Lower leg skin (tissue), 4 donors: ENCODE measurements at regions of chr6 and their contacts with region 1.

Region 1: DNA sequence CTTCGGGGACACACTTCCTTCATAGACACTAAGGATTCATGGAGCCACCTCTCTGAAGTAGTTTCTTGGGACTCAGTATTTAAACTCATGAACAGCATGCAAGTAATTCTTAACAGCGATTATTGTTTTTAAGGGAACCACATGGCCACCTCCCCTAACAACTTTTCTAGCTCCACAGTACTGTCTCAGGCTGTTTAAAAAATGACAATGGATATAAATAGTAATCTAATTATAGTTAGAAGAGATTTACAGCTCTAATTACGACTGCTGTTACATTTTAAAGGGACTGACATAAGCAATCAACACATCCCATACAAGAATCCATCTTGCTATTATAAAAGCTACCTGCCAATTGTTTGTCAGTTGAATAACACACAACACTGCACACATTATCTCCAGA is 72.1 kb upstream of the HDGFL1 start:
- DNase-seq: no peak
- H3K4me3 ChIP-seq: no peak overlapping the region
- CTCF ChIP-seq: no peak
- POLR2A ChIP-seq: no peak

Region 2: GRCh38 chr6:22526736-22527135 is 29.5 kb after region 1 on chr6:
- intact Hi-C with region 1: loop called (anchors 1 kb)
- DNase-seq: no peak
- H3K4me3 ChIP-seq: no peak overlapping the region
- CTCF ChIP-seq: no peak
- POLR2A ChIP-seq: no peak

Region 3: GRCh38 chr6:24099181-24099580 is 1601.9 kb after region 1 on chr6:
- intact Hi-C with region 1: no loop called
- DNase-seq: no peak
- H3K4me3 ChIP-seq: no peak overlapping the region
- CTCF ChIP-seq: no peak
- POLR2A ChIP-seq: no peak